ENCODE measurements at regions of chr19 and their contacts with region 1.

Region 1: DNA sequence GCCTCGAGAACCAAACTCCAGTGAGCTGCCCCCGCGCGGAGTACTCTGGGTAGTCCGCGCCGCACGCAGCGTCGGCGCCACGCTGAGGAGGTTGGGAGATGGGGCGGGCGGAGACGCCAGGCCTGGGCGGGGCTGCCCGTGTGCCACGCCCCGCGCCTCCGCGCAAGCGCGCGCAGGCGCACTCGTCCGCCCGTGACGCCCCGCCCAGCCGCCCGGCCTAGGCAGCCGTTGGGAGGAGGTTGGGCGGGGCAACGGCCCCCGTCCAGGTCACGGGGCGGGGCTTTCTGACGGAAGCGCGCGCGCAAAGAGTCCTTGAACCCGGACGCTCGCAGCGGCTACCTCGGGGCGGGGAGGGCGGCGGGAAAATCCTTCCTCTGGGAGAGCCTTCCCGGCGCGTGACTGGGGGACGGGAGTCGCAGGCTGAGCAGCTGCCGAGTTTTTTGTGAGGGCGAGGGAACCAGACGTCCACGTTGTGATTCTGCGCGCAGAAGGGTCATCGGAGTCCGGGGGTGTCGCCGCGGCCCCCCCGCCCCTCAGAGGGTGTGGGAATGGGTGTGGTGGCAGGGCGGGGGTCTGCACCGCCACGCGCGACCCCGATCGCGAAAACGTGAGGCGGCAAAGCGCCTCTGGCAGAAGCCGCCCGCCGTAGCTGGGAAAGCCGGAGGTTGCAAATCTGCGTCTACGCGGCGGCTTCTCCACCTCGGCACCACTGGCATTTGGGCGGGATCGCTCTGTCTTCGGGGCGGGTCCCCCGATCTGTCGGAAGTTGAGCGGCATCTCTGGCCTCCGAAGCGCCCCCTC is at the start of gene MED26:
- DNase-seq: peak; percentile 97
- H3K4me3 ChIP-seq: peak within 1 kb of the TSS; percentile 98
- H3K27ac ChIP-seq: peak within 1 kb of the TSS; percentile 89
- H3K4me1 ChIP-seq: no peaks in the 10 kb centered on the region
- H3K27me3 ChIP-seq: no peaks in the 10 kb centered on the region
- CTCF ChIP-seq: no peak
- total RNA-seq, gene MED26: 10.0 to 11.9 TPM

Region 2: GRCh38 chr19:16572332-16573211 is 55.8 kb before region 1 on chr19 and contains the start of gene SLC35E1:
- intact Hi-C with region 1: loop called (anchors 5 kb)
- DNase-seq: peak; percentile 96
- H3K4me3 ChIP-seq: peak within 1 kb of the TSS; percentile 99
- H3K27ac ChIP-seq: peak within 1 kb of the TSS; percentile 80
- H3K4me1 ChIP-seq: peaks cover 8% of the 10 kb centered on the region
- H3K27me3 ChIP-seq: no peaks in the 10 kb centered on the region
- CTCF ChIP-seq: no peak
- total RNA-seq, gene SLC35E1: 44.4 to 47.7 TPM